ENCODE measurements at regions of chr5 and their contacts with region 1.

Region 1: GRCh38 chr5:139422307-139422893 is 16.9 kb downstream of the DNAJC18 start:
- DNase-seq: peak in 1 of 2 donors; percentile 46
- H3K4me3 ChIP-seq: no peak overlapping the region
- H3K27ac ChIP-seq: no peak overlapping the region
- H3K4me1 ChIP-seq: no peaks in the 10 kb centered on the region
- H3K27me3 ChIP-seq: no peaks in the 10 kb centered on the region
- CTCF ChIP-seq: peak; percentile 65 to 92 (median 80)
- POLR2A ChIP-seq: no peak

Region 2: DNA sequence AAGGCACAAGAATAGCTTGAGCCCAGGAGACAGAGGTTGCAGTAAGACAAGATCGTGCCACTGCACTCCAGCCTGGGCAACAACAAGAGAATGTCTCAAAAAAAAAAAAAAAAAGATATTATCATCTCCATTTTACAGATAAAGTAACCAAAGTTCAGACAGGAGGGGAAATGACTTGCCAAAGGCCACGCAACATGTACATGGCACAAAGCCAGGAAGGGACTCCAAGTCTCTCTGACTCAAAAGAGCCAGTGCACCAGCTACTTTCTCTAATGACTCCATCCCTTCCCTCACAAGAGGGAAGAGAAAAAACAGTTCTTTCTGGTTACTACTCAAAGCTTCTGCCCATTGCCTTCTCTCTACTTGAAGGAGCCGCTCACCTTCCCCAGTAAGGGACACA is 258.4 kb before region 1 on chr5:
- intact Hi-C with region 1: no loop called
- DNase-seq: no peak
- H3K4me3 ChIP-seq: no peak overlapping the region
- H3K27ac ChIP-seq: no peak overlapping the region
- H3K4me1 ChIP-seq: peaks cover 0 to 6% of the 10 kb centered on the region in 2 donors
- H3K27me3 ChIP-seq: no peaks in the 10 kb centered on the region
- CTCF ChIP-seq: no peak
- POLR2A ChIP-seq: no peak

Region 3: DNA sequence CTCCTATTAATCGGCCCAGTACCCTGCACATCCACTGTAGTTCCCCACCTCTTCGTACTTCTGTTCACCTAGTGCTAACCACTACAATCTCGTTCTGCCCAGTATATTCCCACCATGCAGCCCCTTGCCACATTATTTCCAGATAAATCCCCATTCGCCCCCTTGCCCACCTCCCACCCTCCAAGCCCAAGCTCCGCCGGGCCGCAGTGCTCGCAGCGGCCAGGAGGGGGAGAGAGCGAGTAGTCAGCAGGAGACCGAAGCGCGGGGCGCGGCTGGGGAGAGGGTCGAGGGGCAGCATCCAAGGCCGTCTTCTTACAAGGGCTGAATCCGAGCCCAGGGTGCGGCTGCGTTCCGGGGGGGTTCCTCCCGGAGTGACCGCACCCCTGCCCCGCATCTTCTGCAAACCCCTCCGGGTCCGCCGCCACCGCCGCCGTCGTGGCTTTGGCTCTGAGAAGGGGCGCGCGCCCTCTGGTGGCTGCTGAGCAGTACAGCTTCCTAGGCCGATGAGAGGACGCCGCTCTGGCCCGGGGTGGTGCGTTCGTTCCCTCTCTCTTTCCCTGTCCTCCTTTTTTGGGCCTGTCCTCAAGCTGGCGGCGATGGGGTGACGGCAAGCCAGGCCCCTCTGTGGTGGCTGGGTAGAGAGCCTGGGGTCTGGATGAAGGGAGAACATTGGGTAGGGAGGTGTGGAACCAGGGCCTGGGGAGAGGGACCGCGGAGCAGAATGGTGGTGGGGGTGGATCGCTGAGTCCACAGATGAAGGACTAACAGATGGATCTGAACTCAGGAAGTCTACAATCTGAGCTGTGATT is 343.2 kb after region 1 on chr5:
- intact Hi-C with region 1: loop called (anchors 10 kb)
- DNase-seq: peak; percentile 62 to 80
- H3K4me3 ChIP-seq: peak overlapping the region; percentile 45 to 46
- H3K27ac ChIP-seq: no peak overlapping the region
- H3K4me1 ChIP-seq: peaks cover 0 to 5% of the 10 kb centered on the region in 2 donors
- H3K27me3 ChIP-seq: no peaks in the 10 kb centered on the region
- CTCF ChIP-seq: peak; percentile 93 to 99 (median 98)
- POLR2A ChIP-seq: peak in 1 of 2 donors; percentile 37

Measured in uterus (tissue), 4 donors.